ENCODE measurements at regions of chr11 and their contacts with region 1.

Region 1: DNA sequence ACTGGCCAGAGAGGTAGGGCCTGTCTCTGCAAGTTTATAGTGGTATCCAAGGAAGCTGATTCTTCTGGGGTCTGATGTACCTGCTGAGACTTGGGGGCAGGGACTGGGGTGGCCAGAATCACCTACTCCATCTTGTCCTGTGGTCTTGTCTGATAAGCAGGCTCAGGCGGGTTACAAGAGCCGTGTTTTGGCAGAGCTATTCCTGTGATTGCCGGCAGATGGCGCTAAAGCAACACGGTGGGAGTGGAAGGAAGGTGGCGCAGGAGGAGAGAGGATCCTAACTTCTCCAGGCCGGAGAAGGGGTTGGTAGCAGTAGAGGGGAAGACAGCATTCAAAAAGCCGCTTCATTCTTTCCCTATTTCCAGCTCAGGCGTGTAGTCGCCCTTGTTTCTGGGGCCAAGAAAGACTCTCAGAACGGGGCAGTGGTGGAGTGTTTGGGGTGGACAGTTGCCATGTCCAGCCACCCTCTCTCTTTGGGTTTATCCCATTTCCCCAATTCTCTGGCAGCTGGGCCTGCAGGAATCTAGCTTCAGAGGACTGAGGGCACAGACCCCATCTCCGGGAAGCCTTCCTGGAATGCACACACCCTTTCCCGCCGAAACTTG is 15.1 kb downstream of the CHRM1 start:
- DNase-seq: peak; percentile 86
- ATAC-seq: peak; percentile 83
- H3K4me3 Mint-ChIP-seq: no peak overlapping the region
- H3K27ac Mint-ChIP-seq: no peak overlapping the region
- H3K4me1 Mint-ChIP-seq: peaks cover 18% of the 10 kb centered on the region
- H3K27me3 Mint-ChIP-seq: peaks cover 27% of the 10 kb centered on the region

Region 2: DNA sequence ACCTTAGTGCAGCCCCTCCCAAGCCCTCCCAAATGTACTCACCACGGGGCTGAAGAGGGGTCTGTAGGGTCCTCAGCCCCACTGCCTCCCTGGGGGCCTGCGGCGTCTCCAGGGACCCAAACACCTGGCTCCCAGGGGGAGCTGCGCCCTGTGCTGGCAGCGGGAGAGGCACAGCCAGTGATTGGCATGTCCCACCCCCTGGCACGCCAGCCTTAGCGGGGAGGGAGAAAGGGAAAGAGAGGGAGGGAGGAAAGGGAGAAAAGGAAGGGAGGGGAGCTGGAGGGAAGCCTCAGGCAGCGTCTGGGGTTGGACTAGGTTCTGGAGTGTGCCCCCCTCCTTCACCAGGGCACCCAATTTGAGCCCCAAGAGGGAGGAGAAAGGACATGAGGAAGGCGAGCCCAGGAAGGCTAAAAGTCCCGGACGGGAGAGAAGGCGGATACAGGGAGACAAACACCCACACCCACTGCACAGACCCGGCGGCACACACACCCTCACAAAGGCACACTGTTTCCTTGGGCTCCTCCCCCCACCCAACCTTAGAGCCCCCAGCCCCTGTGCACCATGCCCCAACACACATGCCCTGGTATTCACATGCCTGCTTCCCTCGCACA is 15.3 kb after region 1 on chr11 and contains the start of gene CHRM1:
- CTCF ChIA-PET with region 1: interaction called, 34 read pairs
- POLR2A ChIA-PET with region 1: no interaction called
- DNase-seq: no peak
- ATAC-seq: no peak
- H3K4me3 Mint-ChIP-seq: no peak within 1 kb of the TSS
- H3K27ac Mint-ChIP-seq: no peak within 1 kb of the TSS
- H3K4me1 Mint-ChIP-seq: peaks cover 21% of the 10 kb centered on the region
- H3K27me3 Mint-ChIP-seq: peaks cover 45% of the 10 kb centered on the region
- total RNA-seq, gene CHRM1: not detected

Region 3: GRCh38 chr11:62928051-62928450 is 22.0 kb after region 1 on chr11:
- CTCF ChIA-PET with region 1: interaction called, 10 read pairs
- POLR2A ChIA-PET with region 1: no interaction called
- DNase-seq: no peak
- ATAC-seq: no peak
- H3K4me3 Mint-ChIP-seq: no peak overlapping the region
- H3K27ac Mint-ChIP-seq: no peak overlapping the region
- H3K4me1 Mint-ChIP-seq: peaks cover 22% of the 10 kb centered on the region
- H3K27me3 Mint-ChIP-seq: peaks cover 69% of the 10 kb centered on the region

Region 4: GRCh38 chr11:62974848-62975522 is 69.0 kb after region 1 on chr11:
- CTCF ChIA-PET with region 1: interaction called, 43 read pairs
- POLR2A ChIA-PET with region 1: no interaction called
- DNase-seq: no peak
- ATAC-seq: no peak
- H3K4me3 Mint-ChIP-seq: no peak overlapping the region
- H3K27ac Mint-ChIP-seq: no peak overlapping the region
- H3K4me1 Mint-ChIP-seq: no peaks in the 10 kb centered on the region
- H3K27me3 Mint-ChIP-seq: peaks cover 11% of the 10 kb centered on the region

Region 5: DNA sequence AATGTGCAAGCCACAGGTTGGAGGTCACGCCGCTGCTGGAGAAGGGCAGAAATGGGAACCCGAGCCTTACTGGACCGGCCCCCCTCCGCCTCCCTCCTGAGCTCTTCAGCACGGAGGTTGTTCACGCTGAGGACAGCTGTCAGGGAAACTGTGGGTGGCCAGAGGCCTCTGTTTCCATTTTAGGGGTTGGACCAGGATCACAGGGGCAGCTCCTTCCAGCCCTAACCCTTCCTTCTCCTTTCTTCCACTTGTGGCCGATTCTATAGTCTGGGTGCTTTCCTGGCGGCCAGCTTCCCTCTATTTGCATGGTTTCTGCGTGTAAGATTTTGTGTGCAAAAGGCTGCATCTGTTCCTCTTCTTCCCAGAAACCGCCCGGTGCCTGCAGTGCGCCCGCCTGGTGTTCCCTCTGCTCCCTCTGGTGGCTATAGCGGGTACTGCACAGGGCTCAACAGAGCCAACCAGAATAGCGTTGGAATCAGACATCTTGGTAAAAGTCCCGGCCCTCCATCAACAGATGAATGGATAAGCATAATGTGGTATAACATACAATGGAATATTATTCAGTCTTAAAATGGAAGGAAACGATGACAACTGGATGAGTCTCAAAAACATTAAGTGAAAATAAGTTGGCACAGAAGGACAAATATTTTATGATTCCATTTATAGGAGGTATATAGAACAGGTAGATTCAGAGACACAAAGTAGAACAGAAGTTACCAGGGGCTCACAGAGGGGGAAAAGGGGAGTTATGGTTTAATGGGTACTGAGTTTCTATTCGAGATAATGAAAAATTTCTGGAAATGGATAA is 118.0 kb after region 1 on chr11:
- CTCF ChIA-PET with region 1: interaction called, 251 read pairs
- POLR2A ChIA-PET with region 1: no interaction called
- DNase-seq: peak; percentile 86
- ATAC-seq: peak; percentile 86
- H3K4me3 Mint-ChIP-seq: no peak overlapping the region
- H3K27ac Mint-ChIP-seq: no peak overlapping the region
- H3K4me1 Mint-ChIP-seq: peaks cover 3% of the 10 kb centered on the region
- H3K27me3 Mint-ChIP-seq: peaks cover 9% of the 10 kb centered on the region

Region 6: DNA sequence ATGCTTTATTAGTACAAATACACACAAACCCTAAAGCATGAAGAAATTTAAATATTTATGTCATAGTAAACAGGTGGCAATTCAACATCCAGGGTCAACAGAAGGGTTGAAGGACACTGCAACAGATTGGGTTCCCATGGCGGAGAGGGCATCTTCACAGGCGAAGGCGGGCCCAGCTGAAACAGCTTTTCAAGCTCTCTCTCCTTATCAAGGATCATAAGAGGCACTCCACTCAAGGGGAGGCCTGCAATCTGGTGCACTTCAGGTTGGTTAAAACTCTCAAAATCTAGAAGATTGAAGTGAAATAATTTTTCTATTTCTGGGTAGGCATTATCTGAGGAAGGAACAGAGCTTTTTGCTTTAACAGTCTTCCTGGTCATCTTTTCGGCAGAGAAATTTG is 126.4 kb after region 1 on chr11:
- CTCF ChIA-PET with region 1: interaction called, 31 read pairs
- POLR2A ChIA-PET with region 1: no interaction called
- DNase-seq: no peak
- ATAC-seq: no peak
- H3K4me3 Mint-ChIP-seq: no peak overlapping the region
- H3K27ac Mint-ChIP-seq: no peak overlapping the region
- H3K4me1 Mint-ChIP-seq: no peaks in the 10 kb centered on the region
- H3K27me3 Mint-ChIP-seq: peaks cover 15% of the 10 kb centered on the region

Measured in activated CD8-positive, alpha-beta T cell treated with anti-CD3 and anti-CD28 coated beads, Interleukin-2, amount 10 ng/mL, durations not matched to agents 7 days and 5 days (primary cell).